ENCODE measurements at regions of chr2 and their contacts with region 1.

Region 1: GRCh38 chr2:96556441-96557330 is 20.1 kb downstream of the ARID5A start:
- DNase-seq: peak; percentile 89 to 93
- H3K4me3 ChIP-seq: peak overlapping the region; percentile 16; the same call in 1 of the 2 replicates
- H3K4me3 Mint-ChIP-seq: peak overlapping the region; percentile 66
- H3K27ac Mint-ChIP-seq: peak overlapping the region; percentile 87
- H3K4me1 ChIP-seq: peaks cover 18% of the 10 kb centered on the region
- H3K4me1 Mint-ChIP-seq: peaks cover 16% of the 10 kb centered on the region
- H3K27me3 ChIP-seq: no peaks in the 10 kb centered on the region
- H3K27me3 Mint-ChIP-seq: no peaks in the 10 kb centered on the region
- CTCF ChIP-seq: no peak

Region 2: DNA sequence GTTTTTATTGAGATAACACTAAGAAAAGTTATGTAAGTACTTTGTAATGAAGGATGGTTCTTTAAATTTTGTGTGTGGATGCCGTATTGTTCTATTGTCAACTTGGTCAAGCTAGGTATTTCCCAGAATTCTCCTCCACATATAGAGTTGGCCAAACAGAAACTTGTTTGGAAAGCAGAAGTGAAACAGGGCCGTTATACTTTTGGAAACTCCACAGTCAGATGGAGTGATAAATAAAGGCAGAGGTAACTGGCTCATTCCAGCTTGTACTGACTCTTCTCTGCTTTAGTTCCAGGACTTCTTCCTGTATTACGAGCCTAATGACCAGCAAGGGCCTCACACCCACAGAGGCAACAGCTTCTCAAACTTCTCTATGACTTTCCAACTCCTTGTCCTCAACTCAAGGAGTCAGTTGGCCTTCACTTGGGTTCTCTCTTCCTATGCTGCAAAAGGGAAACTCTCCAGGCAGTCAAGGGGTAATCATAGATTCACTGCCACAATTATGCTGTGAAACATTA is 331.6 kb before region 1 on chr2:
- CTCF ChIA-PET with region 1: no interaction called
- POLR2A ChIA-PET with region 1: no interaction called
- intact Hi-C with region 1: no loop called
- DNase-seq: no peak
- H3K4me3 ChIP-seq: no peak overlapping the region
- H3K4me3 Mint-ChIP-seq: no peak overlapping the region
- H3K27ac Mint-ChIP-seq: no peak overlapping the region
- H3K4me1 ChIP-seq: no peaks in the 10 kb centered on the region
- H3K4me1 Mint-ChIP-seq: no peaks in the 10 kb centered on the region
- H3K27me3 ChIP-seq: no peaks in the 10 kb centered on the region
- H3K27me3 Mint-ChIP-seq: no peaks in the 10 kb centered on the region
- CTCF ChIP-seq: no peak

Region 3: GRCh38 chr2:96524482-96525210 is 32.0 kb before region 1 on chr2:
- CTCF ChIA-PET with region 1: no interaction called
- POLR2A ChIA-PET with region 1: no interaction called
- intact Hi-C with region 1: no loop called
- DNase-seq: no peak
- H3K4me3 ChIP-seq: no peak overlapping the region
- H3K4me3 Mint-ChIP-seq: no peak overlapping the region
- H3K27ac Mint-ChIP-seq: no peak overlapping the region
- H3K4me1 ChIP-seq: no peaks in the 10 kb centered on the region
- H3K4me1 Mint-ChIP-seq: no peaks in the 10 kb centered on the region
- H3K27me3 ChIP-seq: no peaks in the 10 kb centered on the region
- H3K27me3 Mint-ChIP-seq: no peaks in the 10 kb centered on the region
- CTCF ChIP-seq: no peak

Region 4: DNA sequence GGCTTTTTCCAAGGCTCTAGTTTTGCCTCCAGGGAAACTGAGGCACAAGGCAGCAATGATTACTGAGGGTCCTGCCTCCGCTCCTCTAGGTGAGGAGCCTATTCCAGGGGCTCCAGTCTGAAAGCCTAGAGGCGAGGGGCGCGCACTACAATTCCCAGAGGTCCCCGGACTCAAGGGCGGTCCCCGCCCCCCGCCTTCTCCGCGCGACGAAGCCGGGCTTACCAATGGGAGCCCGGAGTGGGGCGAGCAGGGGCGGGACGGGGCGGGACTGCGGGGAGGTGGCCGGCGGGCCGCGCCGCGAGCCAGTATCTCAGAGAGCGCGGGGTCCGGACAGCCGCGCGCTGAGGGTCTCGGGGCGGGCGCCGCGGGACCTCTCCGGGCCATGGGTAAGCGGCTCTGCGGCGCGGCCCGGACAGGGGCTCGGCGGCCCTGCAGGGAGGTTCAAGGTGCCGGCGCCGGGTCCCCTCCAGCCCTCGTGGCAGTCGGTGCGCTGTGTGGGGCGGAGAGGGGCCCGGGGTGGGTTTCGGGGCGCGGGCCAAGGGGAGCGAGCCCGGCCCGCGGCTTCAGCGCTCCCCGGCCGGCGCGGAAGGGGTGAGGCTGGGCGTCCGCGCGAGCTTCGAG is 20.1 kb before region 1 on chr2 and contains the start of gene ARID5A:
- CTCF ChIA-PET with region 1: interaction called, 5 read pairs
- POLR2A ChIA-PET with region 1: no interaction called
- intact Hi-C with region 1: loop called (anchors 1 kb)
- DNase-seq: peak; percentile 92
- H3K4me3 ChIP-seq: peak within 1 kb of the TSS; percentile 57
- H3K4me3 Mint-ChIP-seq: peak within 1 kb of the TSS; percentile 87
- H3K27ac Mint-ChIP-seq: no peak within 1 kb of the TSS
- H3K4me1 ChIP-seq: peaks cover 7% of the 10 kb centered on the region
- H3K4me1 Mint-ChIP-seq: peaks cover 5% of the 10 kb centered on the region
- H3K27me3 ChIP-seq: no peaks in the 10 kb centered on the region
- H3K27me3 Mint-ChIP-seq: no peaks in the 10 kb centered on the region
- CTCF ChIP-seq: peak; percentile 26 to 72
- total RNA-seq, gene ARID5A: 3.0 and 3.3 TPM in 2 replicates

Region 5: DNA sequence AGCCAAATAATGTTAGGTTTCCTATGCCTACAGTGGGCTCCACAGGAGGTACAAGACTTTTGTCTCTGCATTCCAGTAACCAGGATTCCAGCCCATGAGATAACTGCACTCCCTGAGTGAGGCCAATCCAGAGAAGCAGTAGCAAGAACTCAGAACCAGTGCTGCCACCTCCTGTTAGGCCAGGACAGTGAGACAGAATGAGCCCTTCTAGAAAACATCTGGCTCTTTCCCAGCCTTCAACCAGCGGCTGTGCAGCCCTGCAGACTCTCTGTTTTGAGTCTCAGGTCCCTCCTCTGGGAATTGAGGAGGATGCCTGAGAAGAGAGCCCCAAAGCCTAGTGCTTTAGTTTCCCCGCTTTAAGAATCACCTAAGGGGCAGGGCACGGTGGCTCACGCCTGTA is 24.1 kb after region 1 on chr2:
- CTCF ChIA-PET with region 1: interaction called, 4 read pairs
- POLR2A ChIA-PET with region 1: no interaction called
- intact Hi-C with region 1: loop called (anchors 2 kb)
- DNase-seq: peak; percentile 56 to 60
- H3K4me3 ChIP-seq: no peak overlapping the region
- H3K4me3 Mint-ChIP-seq: no peak overlapping the region
- H3K27ac Mint-ChIP-seq: no peak overlapping the region
- H3K4me1 ChIP-seq: no peaks in the 10 kb centered on the region
- H3K4me1 Mint-ChIP-seq: no peaks in the 10 kb centered on the region
- H3K27me3 ChIP-seq: no peaks in the 10 kb centered on the region
- H3K27me3 Mint-ChIP-seq: no peaks in the 10 kb centered on the region
- CTCF ChIP-seq: peak; percentile 25 to 31

Region 6: DNA sequence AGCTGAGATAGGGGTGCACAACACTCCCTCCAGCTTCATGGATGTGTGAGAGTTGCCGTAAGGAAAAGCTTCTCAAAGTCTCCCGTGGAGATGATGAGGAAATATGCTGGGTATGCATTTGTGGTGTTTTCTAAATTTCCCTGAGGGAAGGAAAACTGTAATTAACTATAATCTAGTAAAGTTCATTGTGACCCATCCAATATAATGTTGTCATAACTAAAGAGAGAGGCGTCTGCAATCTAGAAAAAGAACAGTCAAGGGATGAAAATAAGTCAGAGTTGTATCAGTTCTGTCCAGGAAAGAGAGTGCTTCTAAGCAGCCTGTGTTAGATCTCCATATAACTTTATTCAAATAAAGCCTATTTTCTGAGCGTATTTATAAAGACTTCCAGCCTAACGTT is 190.4 kb after region 1 on chr2:
- CTCF ChIA-PET with region 1: no interaction called
- POLR2A ChIA-PET with region 1: interaction called, 10 read pairs
- intact Hi-C with region 1: no loop called
- DNase-seq: no peak
- H3K4me3 ChIP-seq: no peak overlapping the region
- H3K4me3 Mint-ChIP-seq: no peak overlapping the region
- H3K27ac Mint-ChIP-seq: no peak overlapping the region
- H3K4me1 ChIP-seq: no peaks in the 10 kb centered on the region
- H3K4me1 Mint-ChIP-seq: peaks cover 7% of the 10 kb centered on the region
- H3K27me3 ChIP-seq: no peaks in the 10 kb centered on the region
- H3K27me3 Mint-ChIP-seq: no peaks in the 10 kb centered on the region
- CTCF ChIP-seq: no peak

Region 7: DNA sequence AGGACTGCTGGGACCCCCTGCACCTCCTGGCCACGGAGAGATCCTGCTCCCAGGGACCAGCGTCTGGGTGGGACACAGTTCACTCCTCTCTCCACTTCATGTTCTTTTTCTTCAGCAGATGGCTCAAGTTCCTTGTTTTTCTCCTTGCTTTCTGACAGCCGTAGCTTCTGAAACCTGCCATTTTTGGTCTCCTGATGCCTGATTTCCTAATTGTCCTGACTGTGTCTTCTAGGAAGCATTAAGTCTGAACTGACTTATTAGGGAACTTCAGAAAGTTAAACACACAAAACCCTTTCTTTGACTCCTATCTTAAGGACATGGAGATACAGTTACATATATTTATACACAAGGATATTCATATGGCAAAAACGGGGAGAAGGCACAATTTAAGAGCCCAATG is 226.7 kb after region 1 on chr2:
- CTCF ChIA-PET with region 1: no interaction called
- POLR2A ChIA-PET with region 1: no interaction called
- intact Hi-C with region 1: no loop called
- DNase-seq: no peak
- H3K4me3 ChIP-seq: no peak overlapping the region
- H3K4me3 Mint-ChIP-seq: no peak overlapping the region
- H3K27ac Mint-ChIP-seq: no peak overlapping the region
- H3K4me1 ChIP-seq: peaks cover 13% of the 10 kb centered on the region
- H3K4me1 Mint-ChIP-seq: peaks cover 4% of the 10 kb centered on the region
- H3K27me3 ChIP-seq: no peaks in the 10 kb centered on the region
- H3K27me3 Mint-ChIP-seq: no peaks in the 10 kb centered on the region
- CTCF ChIP-seq: no peak

Measured in Caco-2 (cell line).